Motor neuron (in vitro differentiated cells): ENCODE measurements at regions of chr20 and their contacts with region 1.

Region 1: GRCh38 chr20:18272451-18272850 is 15.9 kb upstream of the ZNF133 start:
- ATAC-seq: peak in 3 of 8 experiments; percentile 49 to 86 (median 79)
- H3K4me3 ChIP-seq: no peak overlapping the region
- H3K27ac ChIP-seq: no peak overlapping the region
- H3K4me1 ChIP-seq: peaks cover 7% of the 10 kb centered on the region in 2 donors

Region 2: GRCh38 chr20:18019070-18019469 is 253.4 kb before region 1 on chr20:
- in situ Hi-C with region 1: loop called in 1 of 9 experiments (anchors 25 kb)
- ATAC-seq: peak in 3 of 8 experiments; percentile 52 to 82 (median 63)
- H3K4me3 ChIP-seq: no peak overlapping the region
- H3K27ac ChIP-seq: no peak overlapping the region
- H3K4me1 ChIP-seq: no peaks in the 10 kb centered on the region

Region 3: GRCh38 chr20:18032977-18033892 is 239.2 kb before region 1 on chr20:
- in situ Hi-C with region 1: loop called in 1 of 9 experiments (anchors 25 kb)
- ATAC-seq: no peak
- H3K4me3 ChIP-seq: no peak overlapping the region
- H3K27ac ChIP-seq: no peak overlapping the region
- H3K4me1 ChIP-seq: peaks cover 0 to 4% of the 10 kb centered on the region in 2 donors

Region 4: GRCh38 chr20:18587665-18588573 is 315.5 kb after region 1 on chr20 and contains the start of gene DTD1:
- in situ Hi-C with region 1: no loop called
- ATAC-seq: peak; percentile 75 to 89 (median 84)
- H3K4me3 ChIP-seq: peak within 1 kb of the TSS; percentile 64 to 89 (median 72)
- H3K27ac ChIP-seq: peak within 1 kb of the TSS; percentile 95 to 96
- H3K4me1 ChIP-seq: peaks cover 30 to 43% of the 10 kb centered on the region in 2 donors
- total RNA-seq, gene DTD1: 44.4 to 163 (median 110) TPM